ENCODE measurements at regions of chr19 and their contacts with region 1.

Region 1: GRCh38 chr19:46265217-46265828 is 31.5 kb upstream of the HIF3A start:
- DNase-seq: peak; percentile 79 to 82
- H3K4me3 ChIP-seq: no peak overlapping the region
- H3K27ac ChIP-seq: no peak overlapping the region
- H3K4me1 ChIP-seq: peaks cover 0 to 3% (median under 1%) of the 10 kb centered on the region in 4 experiments; a peak in 3 of 7 replicates
- H3K27me3 ChIP-seq: no peaks in the 10 kb centered on the region
- CTCF ChIP-seq: peak; percentile 50 to 96 (median 70)
- EP300 ChIP-seq: no peak
- POLR2A ChIP-seq: no peak
- RAD21 ChIP-seq: peak; percentile 95 to 96

Region 2: GRCh38 chr19:46021531-46022041 is 243.7 kb before region 1 on chr19:
- CTCF ChIA-PET with region 1: interaction called, 35 read pairs
- POLR2A ChIA-PET with region 1: no interaction called
- DNase-seq: no peak
- H3K4me3 ChIP-seq: no peak overlapping the region
- H3K27ac ChIP-seq: no peak overlapping the region
- H3K4me1 ChIP-seq: peaks cover 0 to 14% (median 8%) of the 10 kb centered on the region in 4 experiments; a peak in 6 of 7 replicates
- H3K27me3 ChIP-seq: peaks cover 0 to 2% (median 0%) of the 10 kb centered on the region in 4 experiments; a peak in 2 of 7 replicates
- CTCF ChIP-seq: peak; percentile 20 to 43 (median 39)
- EP300 ChIP-seq: no peak
- POLR2A ChIP-seq: no peak
- RAD21 ChIP-seq: no peak

Region 3: DNA sequence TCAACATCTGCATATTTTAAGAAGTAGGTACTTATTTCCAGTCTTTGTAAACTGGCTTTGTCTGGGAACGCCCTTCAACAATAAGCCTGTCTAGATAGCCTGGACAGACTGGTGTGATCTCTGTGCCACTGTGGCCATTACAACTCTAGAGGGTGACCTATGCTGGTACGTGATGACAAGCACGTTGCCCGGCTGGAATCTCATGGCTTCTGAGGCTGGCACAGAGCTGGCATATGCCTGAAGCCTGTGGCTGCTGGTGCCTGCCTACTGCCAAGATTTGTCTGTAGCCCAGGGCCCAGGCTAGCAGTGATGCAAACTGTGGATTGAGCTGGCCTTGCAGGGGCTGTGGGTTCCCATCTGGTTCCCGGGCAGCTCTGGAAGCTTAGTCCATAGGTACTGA is 174.9 kb before region 1 on chr19:
- CTCF ChIA-PET with region 1: interaction called, 12 read pairs
- POLR2A ChIA-PET with region 1: no interaction called
- DNase-seq: no peak
- H3K4me3 ChIP-seq: no peak overlapping the region
- H3K27ac ChIP-seq: no peak overlapping the region
- H3K4me1 ChIP-seq: no peaks in the 10 kb centered on the region
- H3K27me3 ChIP-seq: peaks cover 0 to 2% (median 0%) of the 10 kb centered on the region in 4 experiments; a peak in 1 of 7 replicates
- CTCF ChIP-seq: no peak
- EP300 ChIP-seq: no peak
- POLR2A ChIP-seq: no peak
- RAD21 ChIP-seq: no peak

Region 4: GRCh38 chr19:46192992-46193650 is 72.2 kb before region 1 on chr19:
- CTCF ChIA-PET with region 1: interaction called, 33 read pairs
- POLR2A ChIA-PET with region 1: no interaction called
- DNase-seq: no peak
- H3K4me3 ChIP-seq: no peak overlapping the region
- H3K27ac ChIP-seq: no peak overlapping the region
- H3K4me1 ChIP-seq: no peaks in the 10 kb centered on the region
- H3K27me3 ChIP-seq: no peaks in the 10 kb centered on the region
- CTCF ChIP-seq: no peak
- EP300 ChIP-seq: no peak
- POLR2A ChIP-seq: no peak
- RAD21 ChIP-seq: no peak

Region 5: GRCh38 chr19:46229442-46229841 is 35.9 kb before region 1 on chr19 and contains the start of gene IGFL1:
- CTCF ChIA-PET with region 1: interaction called, 11 read pairs
- POLR2A ChIA-PET with region 1: no interaction called
- DNase-seq: no peak
- H3K4me3 ChIP-seq: no peak within 1 kb of the TSS
- H3K27ac ChIP-seq: no peak within 1 kb of the TSS
- H3K4me1 ChIP-seq: 0 out of 7 replicates have a peak, but pooled peaks cover 0 to 3% (median 0%) of the 10 kb centered on the region in 4 experiments
- H3K27me3 ChIP-seq: peaks cover 0 to 2% (median under 1%) of the 10 kb centered on the region in 4 experiments; a peak in 1 of 7 replicates
- CTCF ChIP-seq: no peak
- EP300 ChIP-seq: no peak
- POLR2A ChIP-seq: no peak
- RAD21 ChIP-seq: no peak
- total RNA-seq, gene IGFL1: not detected in 2 replicates